ENCODE measurements at regions of chr3 and their contacts with region 1.

Region 1: GRCh38 chr3:151838583-151839312 is 24.8 kb downstream of the AADAC start:
- DNase-seq: peak; percentile 65
- H3K4me3 ChIP-seq: no peak overlapping the region
- H3K27ac ChIP-seq: no peak overlapping the region
- H3K4me1 ChIP-seq: no peaks in the 10 kb centered on the region
- CTCF ChIP-seq: peak; percentile 95

Region 2: GRCh38 chr3:151168269-151169094 is 670.3 kb before region 1 on chr3:
- CTCF ChIA-PET with region 1: no interaction called
- POLR2A ChIA-PET with region 1: no interaction called
- intact Hi-C with region 1: loop called (anchors 5 kb)
- DNase-seq: peak; percentile 68
- H3K4me3 ChIP-seq: no peak overlapping the region
- H3K27ac ChIP-seq: no peak overlapping the region
- H3K4me1 ChIP-seq: peaks cover 25% of the 10 kb centered on the region
- CTCF ChIP-seq: peak; percentile 92

Region 3: DNA sequence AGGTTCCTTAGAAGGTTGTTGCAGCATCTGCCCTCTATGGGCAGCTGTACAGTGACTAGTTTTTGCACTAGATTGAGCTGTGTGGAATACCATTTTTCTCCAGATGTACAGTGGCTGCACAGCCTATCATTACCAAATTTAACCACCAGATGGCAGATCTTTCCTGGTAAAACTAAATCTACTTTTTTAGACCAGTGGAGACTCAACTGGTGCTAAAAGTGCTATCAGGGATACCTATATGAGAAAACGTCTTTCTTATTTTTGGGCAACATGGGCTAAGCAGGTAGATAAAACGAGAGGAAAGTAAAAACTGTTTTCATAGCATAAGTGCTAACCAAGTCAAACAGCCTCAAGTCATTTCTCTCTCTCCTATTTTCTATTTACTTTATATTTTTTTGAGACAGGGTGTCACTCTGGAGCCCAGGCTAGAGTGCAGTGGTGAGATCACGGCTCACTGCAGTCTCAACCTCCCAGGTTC is 399.1 kb before region 1 on chr3:
- CTCF ChIA-PET with region 1: no interaction called
- POLR2A ChIA-PET with region 1: no interaction called
- intact Hi-C with region 1: loop called (anchors 5 kb)
- DNase-seq: peak; percentile 54
- H3K4me3 ChIP-seq: no peak overlapping the region
- H3K27ac ChIP-seq: no peak overlapping the region
- H3K4me1 ChIP-seq: no peaks in the 10 kb centered on the region
- CTCF ChIP-seq: peak; percentile 84

Region 4: DNA sequence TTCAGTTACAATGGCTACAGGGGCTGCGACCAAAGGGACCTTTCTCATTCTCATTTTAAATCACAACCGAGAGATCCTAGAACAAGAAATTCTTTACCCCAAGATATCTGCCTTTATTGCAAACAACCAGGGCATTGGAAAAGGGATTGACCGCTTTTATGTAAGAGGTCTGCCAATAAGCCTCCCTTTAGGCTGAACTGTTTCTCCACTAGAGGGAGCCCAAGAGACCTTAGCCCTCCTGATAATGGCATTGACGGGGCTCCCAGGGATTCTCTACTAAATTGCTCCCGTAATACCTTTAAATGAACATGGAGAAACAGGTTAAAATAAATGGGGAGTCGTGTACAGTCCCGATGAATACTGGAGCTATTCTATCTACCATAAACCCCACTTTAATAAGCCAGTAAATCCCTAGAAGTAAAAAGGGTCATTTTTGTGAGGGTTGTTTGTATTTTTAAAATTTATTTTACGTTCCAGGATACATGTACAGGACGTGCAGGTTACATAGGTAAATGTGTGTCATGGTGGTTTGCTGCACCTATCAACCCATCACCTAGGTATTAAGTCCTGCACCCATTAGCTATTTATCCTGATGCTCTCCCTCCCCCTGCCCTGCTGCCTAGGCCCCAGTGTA is 370.3 kb before region 1 on chr3:
- CTCF ChIA-PET with region 1: interaction called, 3 read pairs
- POLR2A ChIA-PET with region 1: no interaction called
- intact Hi-C with region 1: loop called (anchors 5 kb)
- DNase-seq: peak; percentile 60
- H3K4me3 ChIP-seq: no peak overlapping the region
- H3K27ac ChIP-seq: no peak overlapping the region
- H3K4me1 ChIP-seq: no peaks in the 10 kb centered on the region
- CTCF ChIP-seq: peak; percentile 97

Region 5: DNA sequence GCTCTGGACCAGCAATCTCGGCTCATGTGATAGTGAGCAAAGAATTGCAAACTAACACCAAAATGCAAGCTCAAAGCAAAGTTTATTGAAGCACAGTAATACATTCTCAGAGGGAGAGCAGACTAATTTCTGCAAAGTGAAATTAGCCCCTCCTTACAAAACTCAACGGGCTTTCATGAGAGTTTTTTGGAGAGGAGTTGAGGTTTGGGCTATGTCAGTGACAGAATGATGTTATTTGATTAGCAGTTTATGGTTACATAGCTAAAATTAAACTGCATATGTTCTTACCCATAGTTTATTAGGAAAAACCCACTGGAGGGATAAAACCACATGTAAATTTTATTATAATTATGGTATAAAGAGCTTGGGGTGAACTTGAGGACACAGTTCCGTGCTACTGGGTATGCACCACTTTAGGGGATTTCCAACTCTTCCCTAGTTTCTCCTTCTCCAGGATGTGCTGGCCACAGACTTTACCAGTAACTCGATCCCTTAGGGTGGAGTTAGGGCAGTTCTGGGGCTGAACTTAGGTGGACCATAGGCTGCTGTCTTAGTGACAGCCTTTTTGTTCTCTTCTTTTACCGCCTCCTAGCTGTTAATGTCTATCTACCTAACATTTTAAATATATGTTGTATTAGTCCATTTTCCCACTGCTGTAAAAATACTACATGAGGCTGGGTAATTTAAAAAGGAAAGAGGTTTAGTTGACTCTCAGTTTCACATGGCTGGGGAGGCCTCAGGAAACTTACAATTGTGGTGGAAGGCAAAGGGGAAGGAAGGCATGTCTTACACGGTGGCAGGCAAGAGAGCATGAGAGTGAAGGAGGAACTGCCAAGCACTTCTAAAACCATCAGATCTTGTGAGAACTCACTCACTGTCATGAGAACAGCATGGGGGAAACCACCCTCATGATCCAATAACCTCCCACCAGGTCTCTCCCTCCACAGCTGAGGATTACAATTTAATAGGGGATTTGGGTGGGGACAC is 113.9 kb before region 1 on chr3:
- CTCF ChIA-PET with region 1: no interaction called
- POLR2A ChIA-PET with region 1: no interaction called
- intact Hi-C with region 1: no loop called
- DNase-seq: no peak
- H3K4me3 ChIP-seq: no peak overlapping the region
- H3K27ac ChIP-seq: no peak overlapping the region
- H3K4me1 ChIP-seq: no peaks in the 10 kb centered on the region
- CTCF ChIP-seq: no peak

Region 6: DNA sequence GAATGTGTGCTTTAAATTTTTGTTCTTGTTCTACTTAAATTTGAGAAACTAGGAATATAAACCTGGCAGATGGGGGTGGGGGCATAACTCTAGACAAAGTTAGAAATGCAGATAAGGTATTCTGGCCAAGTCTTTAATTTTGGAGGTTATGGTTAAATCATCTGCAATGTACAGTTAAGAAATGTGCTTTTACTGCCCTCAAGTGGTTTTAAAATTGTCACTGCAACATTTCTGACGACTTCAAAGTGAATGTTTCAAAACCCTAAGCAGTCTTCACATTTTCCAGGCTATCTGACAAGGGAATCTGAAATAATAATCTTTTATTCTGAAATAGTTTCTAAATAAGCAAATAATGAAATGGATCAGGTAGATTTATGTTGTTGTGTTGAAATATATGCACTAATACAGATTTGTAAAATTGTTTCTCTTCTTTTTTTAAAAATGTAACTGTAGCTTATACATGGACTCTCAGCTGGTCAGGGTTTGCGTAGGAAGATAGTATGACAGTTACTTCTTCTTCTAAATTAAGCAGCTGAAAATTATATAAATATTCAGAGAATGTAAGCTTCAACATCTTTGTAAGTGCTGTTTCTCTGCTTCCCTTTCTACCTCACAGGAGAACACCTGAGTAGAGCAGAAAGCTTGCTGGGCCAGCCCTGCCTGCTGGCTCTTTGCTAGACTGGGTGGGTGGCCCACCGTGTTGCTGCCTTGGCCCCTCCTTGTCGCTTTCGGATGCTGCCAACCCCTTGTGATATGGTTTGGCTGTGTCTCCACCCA is 79.7 kb after region 1 on chr3:
- CTCF ChIA-PET with region 1: no interaction called
- POLR2A ChIA-PET with region 1: no interaction called
- intact Hi-C with region 1: loop called (anchors 5 kb)
- DNase-seq: peak; percentile 44
- H3K4me3 ChIP-seq: no peak overlapping the region
- H3K27ac ChIP-seq: no peak overlapping the region
- H3K4me1 ChIP-seq: no peaks in the 10 kb centered on the region
- CTCF ChIP-seq: peak; percentile 86

Measured in OCI-LY7 (cell line).